ENCODE measurements at regions of chr2 and their contacts with region 1.

Region 1: DNA sequence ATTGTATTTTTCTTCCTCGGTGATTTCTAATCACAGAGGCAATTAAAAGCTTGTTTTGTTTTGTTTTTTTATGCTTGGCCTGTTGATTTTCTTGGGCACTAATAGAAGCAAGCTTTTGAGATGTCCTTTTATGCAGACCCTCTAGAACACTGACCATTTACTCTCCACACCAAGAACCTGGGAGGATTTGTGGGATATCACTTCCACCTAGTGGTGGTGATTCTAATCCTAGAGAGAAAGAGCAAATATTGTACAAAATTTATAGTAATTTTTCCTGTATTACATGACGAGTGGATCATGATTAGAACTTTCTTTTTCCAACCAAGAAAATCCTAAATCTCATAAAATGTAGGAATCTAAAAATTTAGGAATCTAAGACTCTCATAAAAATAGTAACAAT is 23.4 kb downstream of the NEMP2 start:
- ATAC-seq: peak in 3 of 8 experiments; percentile 32 to 59 (median 59)
- H3K4me3 ChIP-seq: no peak overlapping the region
- H3K27ac ChIP-seq: no peak overlapping the region
- H3K4me1 ChIP-seq: no peaks in the 10 kb centered on the region

Region 2: GRCh38 chr2:190382851-190383250 is 128.3 kb before region 1 on chr2:
- in situ Hi-C with region 1: loop called in 1 of 9 experiments (anchors 25 kb)
- ATAC-seq: peak in 2 of 8 experiments; percentile 21 to 62
- H3K4me3 ChIP-seq: no peak overlapping the region
- H3K27ac ChIP-seq: no peak overlapping the region
- H3K4me1 ChIP-seq: no peaks in the 10 kb centered on the region

Measured in motor neuron (in vitro differentiated cells).